ENCODE measurements at regions of chr3 and their contacts with region 1.

Region 1: DNA sequence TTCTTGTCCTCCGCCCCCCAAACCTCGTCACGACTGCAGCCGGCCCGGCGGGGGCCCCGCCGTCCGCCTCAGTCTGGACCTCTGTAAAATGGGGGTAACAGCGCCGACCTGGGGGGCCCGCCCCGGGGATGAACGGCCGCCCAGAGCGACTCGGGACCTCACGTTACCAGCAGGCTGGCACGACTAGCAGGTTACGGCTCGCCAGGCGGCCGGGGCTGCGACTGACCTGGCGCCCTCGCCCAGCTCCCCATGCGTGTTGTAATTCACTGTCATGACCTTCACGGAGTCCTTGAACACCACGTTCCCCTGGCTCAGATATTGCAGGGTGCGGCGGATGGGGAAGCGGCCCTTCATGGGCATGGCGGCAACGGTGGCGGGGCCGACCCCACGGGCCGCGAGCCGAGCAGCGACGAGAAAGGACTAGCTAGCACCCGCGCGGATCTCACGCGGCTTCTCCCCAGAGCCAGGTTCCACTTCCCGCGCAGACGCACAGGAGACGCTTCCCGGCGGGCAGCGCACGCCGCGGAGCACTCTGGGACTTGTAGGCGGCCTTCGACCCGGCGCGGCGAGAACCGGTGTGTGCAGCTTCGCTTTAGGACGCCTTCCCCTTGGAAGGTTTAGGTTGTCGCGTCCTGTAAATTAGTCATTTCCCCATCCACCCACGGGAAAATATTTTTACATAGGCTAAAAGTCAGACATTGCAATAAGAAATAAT is at the start of gene MRPS25:
- DNase-seq: peak; percentile 92
- ATAC-seq: peak; percentile 98
- H3K4me3 ChIP-seq: peak within 1 kb of the TSS; percentile 36 to 93 (median 79)
- H3K4me3 Mint-ChIP-seq: peak within 1 kb of the TSS; percentile 100
- H3K27ac ChIP-seq: peak within 1 kb of the TSS; percentile 66 to 89
- H3K27ac Mint-ChIP-seq: peak within 1 kb of the TSS; percentile 98
- H3K4me1 ChIP-seq: peaks cover 18 to 23% of the 10 kb centered on the region in 2 donors
- H3K4me1 Mint-ChIP-seq: peaks cover 23% of the 10 kb centered on the region
- H3K27me3 ChIP-seq: no peaks in the 10 kb centered on the region
- H3K27me3 Mint-ChIP-seq: no peaks in the 10 kb centered on the region
- CTCF ChIP-seq: no peak
- total RNA-seq, gene MRPS25: 105 and 108 TPM in 2 replicates

Region 2: DNA sequence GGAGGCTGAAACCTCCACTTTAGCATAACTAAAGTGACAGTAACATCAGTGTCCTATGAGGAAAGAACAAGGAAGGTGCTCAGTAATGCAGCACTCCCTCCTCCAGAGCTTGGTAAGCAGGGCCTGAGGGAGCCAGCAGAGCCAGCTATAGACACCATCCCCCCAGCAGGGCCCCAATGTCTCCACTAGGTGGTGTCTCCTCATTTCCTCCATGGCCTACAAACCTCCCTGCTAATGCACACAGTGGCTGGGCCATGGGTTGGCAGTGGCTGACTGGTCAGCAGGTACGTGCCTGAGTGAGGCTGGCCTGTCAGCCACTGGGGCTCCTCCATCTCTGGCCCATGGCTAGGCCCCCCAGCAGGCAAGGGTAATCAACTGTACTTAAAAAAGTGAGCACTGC is 13.5 kb before region 1 on chr3:
- CTCF ChIA-PET with region 1: interaction called, 6 read pairs
- POLR2A ChIA-PET with region 1: interaction called, 6 read pairs
- intact Hi-C with region 1: loop called (anchors 1 kb)
- DNase-seq: peak; percentile 41
- ATAC-seq: no peak
- H3K4me3 ChIP-seq: no peak overlapping the region
- H3K4me3 Mint-ChIP-seq: peak overlapping the region; percentile 13
- H3K27ac ChIP-seq: peak overlapping the region; percentile 72 to 86
- H3K27ac Mint-ChIP-seq: peak overlapping the region; percentile 93
- H3K4me1 ChIP-seq: peaks cover 52 to 64% of the 10 kb centered on the region in 2 donors
- H3K4me1 Mint-ChIP-seq: peaks cover 65% of the 10 kb centered on the region
- H3K27me3 ChIP-seq: no peaks in the 10 kb centered on the region
- H3K27me3 Mint-ChIP-seq: no peaks in the 10 kb centered on the region
- CTCF ChIP-seq: peak; percentile 59

Region 3: GRCh38 chr3:15098503-15099363 is 33.7 kb after region 1 on chr3 and contains the start of gene RBSN:
- CTCF ChIA-PET with region 1: no interaction called
- POLR2A ChIA-PET with region 1: interaction called, 18 read pairs
- intact Hi-C with region 1: loop called (anchors 1 kb)
- DNase-seq: peak; percentile 97
- ATAC-seq: peak; percentile 84
- H3K4me3 ChIP-seq: peak within 1 kb of the TSS; percentile 73 to 94 (median 82)
- H3K4me3 Mint-ChIP-seq: peak within 1 kb of the TSS; percentile 98
- H3K27ac ChIP-seq: peak within 1 kb of the TSS; percentile 91 to 97
- H3K27ac Mint-ChIP-seq: peak within 1 kb of the TSS; percentile 96
- H3K4me1 ChIP-seq: peaks cover 13 to 23% of the 10 kb centered on the region in 2 donors
- H3K4me1 Mint-ChIP-seq: peaks cover 30% of the 10 kb centered on the region
- H3K27me3 ChIP-seq: peaks cover 0 to 9% (median 0%) of the 10 kb centered on the region in 4 experiments
- H3K27me3 Mint-ChIP-seq: no peaks in the 10 kb centered on the region
- CTCF ChIP-seq: no peak
- total RNA-seq, gene RBSN: 31.2 and 32.6 TPM in 2 replicates